Esophagus muscularis mucosa (tissue), 4 donors: ENCODE measurements at regions of chr4 and their contacts with region 1.

Region 1: GRCh38 chr4:110049951-110050925 is 137.6 kb downstream of the EGF start:
- DNase-seq: peak; percentile 66
- H3K4me3 ChIP-seq: no peak overlapping the region
- H3K27ac ChIP-seq: no peak overlapping the region
- H3K4me1 ChIP-seq: no peaks in the 10 kb centered on the region
- H3K27me3 ChIP-seq: no peaks in the 10 kb centered on the region
- CTCF ChIP-seq: peak; percentile 66 to 81 (median 72)
- EP300 ChIP-seq: no peak
- POLR2A ChIP-seq: no peak

Region 2: DNA sequence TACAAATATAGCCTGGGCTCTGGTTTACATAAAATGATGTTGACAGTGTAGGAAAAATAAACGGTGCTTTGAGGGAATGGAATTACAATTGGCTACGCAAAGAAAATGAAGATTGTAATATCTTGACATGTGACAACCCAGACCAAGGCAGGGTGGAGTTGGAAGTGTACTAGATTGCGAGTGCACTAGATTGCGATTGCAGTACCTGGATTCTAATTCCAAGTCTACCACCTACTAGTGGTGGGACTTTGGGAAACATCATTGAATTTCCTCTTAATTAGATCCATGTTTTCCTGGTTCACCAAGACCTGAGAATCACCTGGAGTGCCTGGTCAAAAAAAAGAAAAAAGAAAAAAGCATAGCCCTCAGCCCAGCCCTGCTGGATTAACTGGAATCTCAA is 118.9 kb before region 1 on chr4:
- intact Hi-C with region 1: no loop called
- DNase-seq: no peak
- H3K4me3 ChIP-seq: no peak overlapping the region
- H3K27ac ChIP-seq: no peak overlapping the region
- H3K4me1 ChIP-seq: no peaks in the 10 kb centered on the region
- H3K27me3 ChIP-seq: no peaks in the 10 kb centered on the region
- CTCF ChIP-seq: no peak
- EP300 ChIP-seq: no peak
- POLR2A ChIP-seq: no peak

Region 3: GRCh38 chr4:110211007-110211769 is 160.9 kb after region 1 on chr4:
- intact Hi-C with region 1: loop called (anchors 1 kb)
- DNase-seq: no peak
- H3K4me3 ChIP-seq: no peak overlapping the region
- H3K27ac ChIP-seq: no peak overlapping the region
- H3K4me1 ChIP-seq: no peaks in the 10 kb centered on the region
- H3K27me3 ChIP-seq: no peaks in the 10 kb centered on the region
- CTCF ChIP-seq: peak; percentile 68 to 85 (median 79)
- EP300 ChIP-seq: no peak
- POLR2A ChIP-seq: no peak

Region 4: GRCh38 chr4:110503270-110504083 is 453.2 kb after region 1 on chr4:
- intact Hi-C with region 1: no loop called
- DNase-seq: no peak
- H3K4me3 ChIP-seq: no peak overlapping the region
- H3K27ac ChIP-seq: peak overlapping the region in 2 of 4 donors; percentile 1 to 52
- H3K4me1 ChIP-seq: peaks cover 0 to 10% (median 7%) of the 10 kb centered on the region in 4 donors
- H3K27me3 ChIP-seq: no peaks in the 10 kb centered on the region
- CTCF ChIP-seq: no peak
- EP300 ChIP-seq: no peak
- POLR2A ChIP-seq: no peak